ENCODE measurements at regions of chr17 and their contacts with region 1.

Region 1: DNA sequence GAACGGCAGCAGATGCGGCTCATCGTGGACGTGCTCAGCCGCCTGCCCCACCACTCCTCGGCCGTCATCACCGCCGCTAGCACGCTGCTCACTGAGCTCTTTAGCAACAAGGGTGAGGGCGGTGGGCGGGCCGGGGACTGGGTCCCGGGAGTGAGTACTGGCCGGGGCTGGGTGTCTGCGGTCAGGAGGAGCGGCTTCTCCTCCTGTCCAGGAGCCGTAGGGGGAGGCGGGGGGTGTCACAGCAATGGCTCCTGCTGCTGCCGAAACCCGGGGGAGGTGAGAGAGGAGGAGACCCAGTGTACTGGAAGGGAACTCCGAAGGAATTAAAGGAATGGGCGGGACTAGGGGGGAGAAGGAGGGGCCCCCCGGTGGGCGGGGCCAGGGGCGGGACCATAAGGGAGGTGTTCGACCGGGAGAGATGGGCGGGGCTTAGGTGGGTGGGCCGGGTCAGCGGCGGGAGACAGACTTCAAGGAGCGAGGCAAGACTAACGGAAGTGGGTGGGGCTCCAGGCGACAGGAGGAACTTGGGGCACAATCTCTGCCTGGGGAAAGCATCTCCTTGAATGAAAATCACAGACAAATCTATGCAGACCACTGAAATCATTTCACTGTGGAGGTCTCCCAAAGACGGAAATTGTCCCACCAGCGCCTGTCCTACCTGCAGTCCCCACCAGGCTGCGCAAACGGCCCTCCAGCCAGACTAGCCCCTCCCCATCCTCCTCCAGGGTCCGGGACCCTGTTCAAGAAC is 2.4 kb downstream of the NAGS start:
- DNase-seq: peak; percentile 100
- H3K4me3 Mint-ChIP-seq: peak overlapping the region; percentile 81
- H3K27ac Mint-ChIP-seq: no peak overlapping the region
- H3K4me1 Mint-ChIP-seq: peaks cover 31% of the 10 kb centered on the region
- H3K27me3 Mint-ChIP-seq: peaks cover 18% of the 10 kb centered on the region

Region 2: DNA sequence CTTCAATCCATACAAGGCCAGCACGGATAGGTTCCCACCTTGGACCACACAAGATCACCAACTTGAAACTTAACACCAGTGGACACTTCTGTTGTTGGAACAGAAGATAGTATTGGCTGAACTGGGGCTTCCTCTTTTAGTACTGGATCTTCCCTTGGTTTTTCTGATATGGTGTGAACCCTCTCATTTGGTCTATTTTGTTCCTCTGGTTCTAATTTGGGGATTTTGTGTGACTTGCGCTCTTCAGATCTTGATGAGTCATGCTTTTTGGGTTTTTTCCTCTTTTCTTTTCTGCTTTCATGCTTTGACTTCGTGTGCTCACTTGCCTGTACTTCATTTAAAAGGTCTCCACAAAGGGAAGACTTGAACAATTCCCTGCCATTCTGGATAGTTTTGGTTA is 287.2 kb before region 1 on chr17:
- CTCF ChIA-PET with region 1: no interaction called
- intact Hi-C with region 1: loop called (anchors 1 kb)
- DNase-seq: no peak
- H3K4me3 Mint-ChIP-seq: peak overlapping the region; percentile 89
- H3K27ac Mint-ChIP-seq: peak overlapping the region; percentile 95
- H3K4me1 Mint-ChIP-seq: peaks cover 18% of the 10 kb centered on the region
- H3K27me3 Mint-ChIP-seq: peaks cover 3% of the 10 kb centered on the region

Region 3: DNA sequence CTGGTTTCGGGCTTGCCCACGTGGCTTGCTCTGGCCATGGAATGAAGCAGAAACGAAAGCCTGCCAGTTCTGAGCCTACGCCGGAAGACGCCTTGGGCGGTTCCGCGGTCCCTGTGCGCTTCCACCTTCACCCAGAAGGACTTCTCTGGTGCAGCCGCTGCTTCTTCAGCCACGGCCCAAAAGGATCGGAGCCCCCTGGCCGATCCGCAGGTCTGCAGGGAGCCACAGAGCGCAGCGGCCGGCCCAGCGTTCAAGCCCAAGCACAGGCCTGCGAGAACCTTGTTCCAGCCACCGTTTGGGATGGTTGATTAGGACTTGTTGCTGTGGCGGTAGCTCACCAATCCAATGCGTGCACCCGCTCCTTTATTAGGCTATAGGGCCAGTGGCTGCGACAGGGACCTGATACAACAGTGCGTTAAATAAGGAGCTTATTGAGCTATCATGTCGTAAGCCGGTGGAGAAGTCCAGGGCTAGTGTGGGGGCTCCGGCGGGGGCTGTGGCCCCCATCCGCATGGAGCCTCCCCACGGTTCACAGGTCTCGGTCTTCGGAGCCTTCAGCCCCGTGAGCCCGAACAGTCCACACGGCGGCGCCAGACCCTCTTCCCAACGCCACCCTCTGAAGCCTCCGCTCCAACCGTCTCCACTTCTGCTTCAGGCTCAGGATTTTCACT is 89.3 kb before region 1 on chr17:
- CTCF ChIA-PET with region 1: no interaction called
- intact Hi-C with region 1: no loop called
- DNase-seq: peak; percentile 73
- H3K4me3 Mint-ChIP-seq: peak overlapping the region; percentile 65
- H3K27ac Mint-ChIP-seq: peak overlapping the region; percentile 9
- H3K4me1 Mint-ChIP-seq: peaks cover 13% of the 10 kb centered on the region
- H3K27me3 Mint-ChIP-seq: no peaks in the 10 kb centered on the region

Region 4: GRCh38 chr17:44044067-44044466 is 37.3 kb after region 1 on chr17:
- CTCF ChIA-PET with region 1: interaction called, 5 read pairs
- intact Hi-C with region 1: loop called (anchors 5 kb)
- DNase-seq: no peak
- H3K4me3 Mint-ChIP-seq: no peak overlapping the region
- H3K27ac Mint-ChIP-seq: no peak overlapping the region
- H3K4me1 Mint-ChIP-seq: peaks cover 11% of the 10 kb centered on the region
- H3K27me3 Mint-ChIP-seq: no peaks in the 10 kb centered on the region

Region 5: DNA sequence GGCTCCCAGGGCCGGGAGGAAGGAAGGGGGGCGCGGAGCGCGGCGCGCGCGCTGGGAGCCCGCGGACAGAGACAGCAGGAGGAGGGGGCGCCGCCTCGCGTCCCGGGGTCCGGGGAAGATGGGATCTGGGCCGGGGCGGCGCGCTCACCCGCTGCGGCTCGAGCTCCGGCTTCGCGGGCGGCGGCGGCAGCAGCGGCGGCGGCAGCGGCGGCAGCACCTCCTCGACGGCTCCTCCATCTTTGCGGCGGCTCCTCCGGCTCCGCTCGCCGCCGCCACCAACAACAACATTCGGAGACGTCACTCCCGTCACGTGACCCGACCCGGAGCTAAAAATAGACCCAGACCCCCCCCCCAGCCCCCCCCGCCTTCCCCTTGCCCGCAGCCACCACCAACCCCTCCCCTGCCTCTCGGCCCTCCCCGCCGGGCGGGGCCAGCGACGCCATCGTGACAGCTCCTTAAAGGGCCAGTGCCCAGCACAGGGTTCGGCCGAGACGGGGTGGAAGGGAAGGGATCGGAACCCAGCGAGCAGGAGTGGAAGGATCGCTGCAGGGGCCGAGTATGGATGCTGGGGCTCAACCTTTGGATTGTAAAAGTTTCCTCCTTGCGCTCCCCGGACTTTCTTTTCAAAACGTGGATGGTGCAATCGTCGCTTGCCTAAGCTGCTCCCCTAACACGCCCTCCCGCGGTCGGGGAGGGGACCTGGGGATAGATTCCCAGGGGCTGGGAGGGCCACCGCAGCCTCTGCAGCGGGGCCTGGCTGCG is 116.8 kb after region 1 on chr17 and contains the start of gene HDAC5:
- CTCF ChIA-PET with region 1: no interaction called
- intact Hi-C with region 1: loop called (anchors 5 kb)
- DNase-seq: peak; percentile 97
- H3K4me3 Mint-ChIP-seq: peak within 1 kb of the TSS; percentile 96
- H3K27ac Mint-ChIP-seq: peak within 1 kb of the TSS; percentile 97
- H3K4me1 Mint-ChIP-seq: peaks cover 32% of the 10 kb centered on the region
- H3K27me3 Mint-ChIP-seq: no peaks in the 10 kb centered on the region
- total RNA-seq, gene HDAC5: 17.9 to 18.9 TPM

Measured in activated naive CD4-positive, alpha-beta T cell treated with anti-CD3 and anti-CD28 coated beads for 36 hours (primary cell).